A673 (cell line): ENCODE measurements at regions of chr10 and their contacts with region 1.

Region 1: DNA sequence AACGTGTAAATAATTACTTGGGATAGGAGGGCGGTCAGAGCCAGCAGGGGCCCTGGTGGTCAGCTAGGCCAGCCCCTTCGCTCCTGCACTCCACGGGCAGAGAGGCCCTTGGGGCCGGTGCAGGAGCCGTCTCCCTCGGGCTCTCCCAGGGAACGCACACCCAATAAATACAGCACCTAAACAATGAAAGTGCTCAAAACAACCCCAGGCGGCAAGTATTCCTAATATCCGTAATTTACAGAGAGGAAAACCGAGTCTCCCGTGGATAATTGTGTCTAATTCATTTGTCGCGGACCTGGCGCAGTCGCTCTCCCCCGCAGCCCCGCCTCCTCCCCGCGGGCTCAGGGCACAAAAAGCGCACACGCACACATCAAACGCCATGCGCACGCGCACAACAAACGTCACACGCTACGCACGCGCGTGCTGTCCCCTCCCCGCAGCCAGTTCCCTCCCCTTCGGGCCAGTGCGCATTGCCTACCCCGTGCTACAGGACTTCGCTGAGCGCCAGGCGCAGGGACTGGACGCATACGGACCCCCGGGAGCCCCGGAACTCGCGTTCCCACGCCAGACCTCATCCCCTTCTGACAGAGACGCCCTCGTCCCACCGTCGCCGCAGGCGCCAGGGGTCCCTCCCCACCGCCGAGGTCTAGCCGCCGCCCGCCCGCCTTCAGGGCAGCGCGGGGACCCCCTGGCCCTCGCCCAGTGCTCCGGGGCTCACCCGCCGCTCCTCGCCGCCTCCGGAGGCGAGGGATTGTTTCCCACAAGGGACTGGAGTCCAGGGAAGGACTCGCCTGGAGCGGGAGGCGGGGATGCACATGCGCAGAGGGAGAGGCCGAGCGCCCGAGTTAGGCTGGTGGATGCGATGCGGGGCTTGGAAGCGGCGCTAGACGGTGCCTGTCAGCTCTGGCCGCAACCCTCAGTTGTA is at the start of gene ZNF248:
- DNase-seq: peak; percentile 97
- H3K4me3 ChIP-seq: peak within 1 kb of the TSS; percentile 77
- H3K27ac ChIP-seq: peak within 1 kb of the TSS; percentile 98
- H3K4me1 ChIP-seq: peaks cover 13% of the 10 kb centered on the region
- H3K27me3 ChIP-seq: no peaks in the 10 kb centered on the region
- CTCF ChIP-seq: no peak
- total RNA-seq, gene ZNF248: 8.7 and 10.6 TPM in 2 replicates

Region 2: GRCh38 chr10:37871568-37872251 is 14.2 kb after region 1 on chr10:
- CTCF ChIA-PET with region 1: no interaction called
- POLR2A ChIA-PET with region 1: no interaction called
- intact Hi-C with region 1: no loop called
- DNase-seq: no peak
- H3K4me3 ChIP-seq: no peak overlapping the region
- H3K27ac ChIP-seq: no peak overlapping the region
- H3K4me1 ChIP-seq: no peaks in the 10 kb centered on the region
- H3K27me3 ChIP-seq: no peaks in the 10 kb centered on the region
- CTCF ChIP-seq: no peak

Region 3: DNA sequence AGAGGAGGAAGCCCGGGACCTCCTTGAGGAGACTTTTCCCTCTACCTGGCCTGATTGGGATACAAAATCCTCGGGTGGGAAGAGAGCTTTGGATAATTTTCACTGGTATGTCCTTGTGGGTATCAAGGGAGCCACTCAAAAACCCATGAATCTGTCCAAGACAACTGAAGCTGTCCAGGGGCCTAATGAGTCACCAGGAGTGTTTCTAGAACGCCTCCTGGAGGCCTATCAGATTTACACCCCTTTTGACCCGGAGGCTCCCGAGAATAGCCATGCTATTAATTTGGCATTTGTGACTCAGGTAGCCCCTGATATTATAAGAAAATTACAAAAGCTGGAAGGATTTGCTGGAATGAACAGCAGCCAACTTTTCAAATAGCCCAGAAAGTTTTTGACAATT is 80.3 kb after region 1 on chr10:
- CTCF ChIA-PET with region 1: no interaction called
- POLR2A ChIA-PET with region 1: no interaction called
- intact Hi-C with region 1: no loop called
- DNase-seq: no peak
- H3K4me3 ChIP-seq: no peak overlapping the region
- H3K27ac ChIP-seq: no peak overlapping the region
- H3K4me1 ChIP-seq: no peaks in the 10 kb centered on the region
- H3K27me3 ChIP-seq: no peaks in the 10 kb centered on the region
- CTCF ChIP-seq: no peak

Region 4: DNA sequence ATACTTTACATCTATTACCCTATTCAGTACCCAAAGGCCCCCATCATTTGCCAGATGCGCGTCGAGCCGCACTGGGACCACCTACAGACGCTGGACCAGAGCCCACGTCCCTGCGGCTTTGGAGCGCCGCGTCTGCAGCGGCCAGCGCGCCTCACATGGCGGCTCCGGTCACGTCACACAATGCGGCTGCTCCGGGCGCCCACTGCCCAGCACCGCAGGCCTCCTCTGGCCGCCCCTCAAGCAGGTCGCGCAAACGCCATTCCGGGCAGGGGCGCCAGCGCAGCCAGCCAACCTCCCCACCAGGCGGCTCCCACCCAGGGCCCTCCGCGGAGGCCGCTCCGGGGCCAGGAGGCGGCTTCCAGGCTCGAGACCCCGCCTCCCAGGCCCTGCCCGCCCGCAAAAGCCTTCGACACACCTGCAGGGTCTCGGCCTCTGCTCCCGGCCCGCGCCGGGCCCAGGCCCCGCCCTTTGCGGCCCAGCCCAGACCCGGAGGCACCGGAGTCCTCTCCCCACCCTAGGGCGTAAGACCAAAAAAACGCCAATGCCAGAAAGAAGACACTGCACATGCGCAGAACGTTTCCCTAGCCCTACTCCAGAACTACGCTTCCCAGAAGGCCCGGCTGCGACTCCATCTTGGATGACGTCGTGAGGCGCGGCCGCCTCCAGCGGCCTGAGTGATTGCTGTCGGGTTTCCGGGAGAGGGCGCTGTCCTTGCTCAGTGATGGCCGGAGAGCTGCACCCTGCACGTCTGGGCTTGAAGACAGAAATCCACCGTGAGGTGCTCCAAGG is 118.7 kb after region 1 on chr10 and contains the start of gene ZNF25:
- CTCF ChIA-PET with region 1: no interaction called
- POLR2A ChIA-PET with region 1: no interaction called
- intact Hi-C with region 1: loop called (anchors 5 kb)
- DNase-seq: peak; percentile 98
- H3K4me3 ChIP-seq: peak within 1 kb of the TSS; percentile 79
- H3K27ac ChIP-seq: peak within 1 kb of the TSS; percentile 92
- H3K4me1 ChIP-seq: no peaks in the 10 kb centered on the region
- H3K27me3 ChIP-seq: no peaks in the 10 kb centered on the region
- CTCF ChIP-seq: peak; percentile 95
- total RNA-seq, gene ZNF25: 5.8 and 6.7 TPM in 2 replicates